ENCODE measurements at regions of chr10 and their contacts with region 1.

Region 1: DNA sequence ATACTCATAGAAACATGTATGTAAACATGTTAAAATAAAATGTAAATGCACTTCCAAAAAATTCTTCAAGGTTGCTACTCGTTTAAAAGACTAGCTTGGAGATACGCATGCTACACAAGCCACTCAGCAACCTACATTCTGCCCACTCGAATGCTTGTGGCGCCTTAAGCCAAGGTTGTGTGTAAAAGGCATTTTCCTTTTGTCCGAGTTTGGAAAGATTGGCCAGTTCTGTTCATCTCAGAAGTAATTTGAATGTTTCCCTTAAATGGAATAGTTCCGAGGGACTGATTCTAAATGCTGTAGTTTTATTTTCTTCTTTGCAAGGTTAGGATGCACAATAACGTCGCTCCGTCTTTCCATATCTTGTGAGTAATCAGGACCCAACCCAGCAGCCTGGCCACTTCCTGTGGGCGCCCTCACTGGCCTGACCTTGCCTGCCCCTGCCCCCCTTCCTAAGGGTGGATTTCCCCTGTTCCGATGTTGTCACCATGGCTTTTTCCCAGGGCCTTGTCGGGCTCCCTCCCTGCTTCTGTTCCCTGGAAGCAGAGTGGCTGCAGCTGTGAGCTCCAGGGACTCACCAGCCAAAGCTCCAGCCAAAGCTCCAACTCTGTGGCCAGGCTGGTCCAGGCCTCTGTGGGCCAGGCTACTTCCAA is 70.6 kb downstream of the PTPRE start:
- DNase-seq: peak; percentile 78 to 91
- ATAC-seq: peak; percentile 88 to 97 (median 95)
- H3K4me3 ChIP-seq: peak overlapping the region in 8 of 10 donors; percentile 2 to 30 (median 16)
- H3K27ac ChIP-seq: peak overlapping the region; percentile 59 to 90 (median 78)
- H3K4me1 ChIP-seq: peaks cover 10 to 61% (median 44%) of the 10 kb centered on the region in 9 donors
- H3K27me3 ChIP-seq: no peaks in the 10 kb centered on the region
- CTCF ChIP-seq: no peak

Region 2: DNA sequence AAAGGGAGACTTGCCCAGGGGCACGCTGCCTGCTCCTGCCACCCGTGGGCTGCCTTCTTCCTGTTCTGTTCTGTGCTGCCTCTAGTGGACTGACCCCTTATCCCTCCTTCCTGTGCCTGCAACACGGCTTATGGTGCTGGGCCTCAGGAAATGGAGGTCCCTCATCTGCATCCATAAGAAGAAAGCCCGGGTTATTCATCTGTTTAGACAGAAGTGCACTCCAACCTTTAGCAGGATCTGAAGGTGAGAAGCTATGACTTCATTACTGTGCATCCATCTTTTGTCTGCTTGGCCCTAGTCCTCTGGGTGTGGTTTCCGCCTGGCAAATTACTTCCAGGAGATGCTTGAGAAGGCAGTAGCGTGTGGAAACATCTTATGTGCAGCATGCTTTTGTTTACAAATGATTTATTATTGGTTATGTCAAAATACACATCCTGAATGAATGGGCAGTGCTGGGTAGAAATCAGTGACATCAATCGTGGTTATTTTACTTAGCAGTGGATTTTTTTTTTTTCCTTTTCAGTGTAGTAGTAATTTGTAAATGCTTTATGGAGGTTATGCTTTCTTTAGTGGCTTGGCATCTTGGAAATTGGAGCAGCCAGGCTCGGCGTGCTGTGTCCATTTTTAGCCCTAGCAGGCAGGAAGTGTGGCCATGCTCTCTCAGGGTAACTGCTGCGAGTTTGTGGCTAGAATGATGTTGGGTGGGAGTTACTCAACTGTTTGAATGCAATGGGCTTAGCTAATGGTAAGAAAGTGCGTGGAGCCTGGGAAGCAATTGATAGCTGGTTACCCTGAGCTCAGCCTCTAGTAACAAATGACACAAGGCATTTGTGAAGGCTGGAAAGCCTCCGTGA is 57.8 kb before region 1 on chr10:
- intact Hi-C with region 1: loop called in 2 of 10 experiments (anchors 10 kb)
- DNase-seq: no peak
- ATAC-seq: peak in 4 of 8 donors; percentile 17 to 51 (median 34)
- H3K4me3 ChIP-seq: no peak overlapping the region
- H3K27ac ChIP-seq: peak overlapping the region; percentile 8 to 94 (median 83)
- H3K4me1 ChIP-seq: peaks cover 16 to 73% (median 63%) of the 10 kb centered on the region in 9 donors
- H3K27me3 ChIP-seq: no peaks in the 10 kb centered on the region
- CTCF ChIP-seq: peak in 6 of 9 donors; percentile 20 to 38 (median 28)

Region 3: GRCh38 chr10:128035557-128035973 is 58.1 kb after region 1 on chr10:
- intact Hi-C with region 1: no loop called
- DNase-seq: peak; percentile 53 to 54
- ATAC-seq: peak in 6 of 8 donors; percentile 44 to 80 (median 62)
- H3K4me3 ChIP-seq: no peak overlapping the region
- H3K27ac ChIP-seq: no peak overlapping the region
- H3K4me1 ChIP-seq: peaks cover 0 to 26% (median 8%) of the 10 kb centered on the region in 9 donors
- H3K27me3 ChIP-seq: no peaks in the 10 kb centered on the region
- CTCF ChIP-seq: peak; percentile 42 to 88 (median 76)

Region 4: DNA sequence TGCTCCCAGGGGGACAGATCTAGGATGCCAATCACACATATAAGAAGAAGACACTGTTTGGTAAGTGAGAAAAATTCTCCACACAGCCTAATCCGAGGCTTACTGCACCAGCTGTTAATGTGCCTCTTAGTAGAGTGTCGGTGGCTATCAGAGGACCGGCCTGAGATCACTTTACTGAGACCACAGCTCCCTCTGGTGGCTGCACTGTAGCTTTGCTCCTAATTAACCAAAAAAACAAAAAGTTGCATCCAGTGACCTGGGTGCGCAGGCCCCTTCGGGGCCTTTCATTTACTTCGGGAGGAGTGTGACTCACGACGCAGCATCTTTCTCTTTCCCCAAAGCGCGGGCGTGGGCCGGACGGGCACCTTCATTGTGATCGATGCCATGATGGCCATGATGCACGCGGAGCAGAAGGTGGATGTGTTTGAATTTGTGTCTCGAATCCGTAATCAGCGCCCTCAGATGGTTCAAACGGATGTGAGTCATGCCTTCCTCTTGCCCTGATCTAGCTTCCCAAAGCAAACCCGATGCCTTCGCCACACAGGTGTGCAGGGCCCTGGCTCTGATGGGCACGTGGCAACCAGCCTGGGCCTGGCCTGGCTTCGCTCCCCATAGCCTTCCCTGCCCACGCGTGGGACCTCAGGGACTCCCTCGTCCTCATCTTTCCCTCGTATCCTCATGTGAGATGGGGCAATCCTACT is 92.0 kb after region 1 on chr10:
- intact Hi-C with region 1: no loop called
- DNase-seq: peak; percentile 73 to 78
- ATAC-seq: peak; percentile 34 to 77 (median 64)
- H3K4me3 ChIP-seq: no peak overlapping the region
- H3K27ac ChIP-seq: no peak overlapping the region
- H3K4me1 ChIP-seq: peaks cover 0 to 25% (median 11%) of the 10 kb centered on the region in 9 donors
- H3K27me3 ChIP-seq: no peaks in the 10 kb centered on the region
- CTCF ChIP-seq: peak; percentile 74 to 90 (median 88)